Posterior vena cava (tissue), 2 donors: ENCODE measurements at regions of chr1 and their contacts with region 1.

Region 1: GRCh38 chr1:113721010-113721409 is 38.3 kb downstream of the PHTF1 start:
- DNase-seq: no peak

Region 2: DNA sequence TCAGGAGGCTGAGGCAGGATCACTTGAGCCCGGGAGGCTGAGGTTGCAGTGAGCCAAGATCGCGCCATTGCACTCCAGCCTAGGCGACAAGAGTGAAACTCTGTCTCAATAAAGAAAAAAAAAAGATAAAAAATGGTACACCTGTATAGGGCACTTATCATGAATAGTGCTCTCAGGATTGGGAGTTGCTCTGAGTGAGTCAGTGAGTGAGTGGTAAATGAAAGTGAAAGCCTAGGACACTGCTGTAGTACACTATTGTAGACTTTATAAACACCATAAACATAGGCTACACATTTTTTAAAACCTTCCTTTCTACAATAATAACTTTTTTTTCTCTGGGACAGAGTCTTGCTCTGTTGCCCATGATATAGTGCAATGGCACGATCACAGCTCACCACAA is 21.5 kb after region 1 on chr1:
- intact Hi-C with region 1: loop called in 1 of 2 experiments (anchors 1 kb)
- DNase-seq: no peak

Region 3: DNA sequence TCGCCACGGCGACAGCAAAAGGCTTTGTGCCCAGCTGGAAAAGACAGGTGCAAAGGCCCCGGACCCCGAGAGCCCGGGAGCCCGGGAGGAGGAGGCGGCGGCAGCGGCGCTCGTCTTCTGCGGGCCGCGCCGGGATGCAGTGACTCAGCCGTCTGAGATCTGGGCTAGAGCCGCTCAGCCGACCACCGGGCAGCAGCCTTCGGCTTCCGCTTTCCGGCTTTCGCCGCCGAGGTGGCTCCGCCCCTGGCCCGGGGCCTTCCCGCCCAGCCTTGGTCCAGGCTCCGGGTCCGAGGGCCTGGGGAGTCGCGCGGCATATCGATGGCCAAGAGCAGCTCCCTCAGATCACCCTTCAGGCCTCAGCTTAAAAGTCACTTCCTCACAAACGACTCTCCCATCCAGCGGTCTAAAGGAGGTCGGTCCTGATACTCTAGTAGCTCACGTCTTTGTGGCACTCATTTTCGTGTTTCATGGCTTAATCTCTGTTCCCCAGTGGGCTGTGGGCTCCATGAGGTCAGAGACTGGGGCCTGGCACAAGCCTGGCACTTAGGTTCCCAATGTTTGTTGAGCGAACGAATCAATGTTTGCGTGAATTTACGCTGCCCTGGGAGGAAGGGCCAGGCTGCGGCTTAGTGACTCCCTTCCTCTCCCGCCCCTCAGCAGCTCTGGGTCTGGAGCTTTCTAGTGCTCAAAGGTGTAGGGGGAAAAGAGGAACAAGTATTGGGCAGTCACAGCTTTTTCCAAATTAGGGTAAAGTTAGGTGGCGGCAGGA is 38.5 kb after region 1 on chr1 and contains the start of gene PHTF1:
- intact Hi-C with region 1: no loop called
- DNase-seq: peak; percentile 96
- total RNA-seq, gene PHTF1: 12.0 to 13.2 TPM